Activated B cell treated with CpG ODN at 0.5 μM for 24 hours (primary cell): ENCODE measurements at regions of chr11 and their contacts with region 1.

Region 1: DNA sequence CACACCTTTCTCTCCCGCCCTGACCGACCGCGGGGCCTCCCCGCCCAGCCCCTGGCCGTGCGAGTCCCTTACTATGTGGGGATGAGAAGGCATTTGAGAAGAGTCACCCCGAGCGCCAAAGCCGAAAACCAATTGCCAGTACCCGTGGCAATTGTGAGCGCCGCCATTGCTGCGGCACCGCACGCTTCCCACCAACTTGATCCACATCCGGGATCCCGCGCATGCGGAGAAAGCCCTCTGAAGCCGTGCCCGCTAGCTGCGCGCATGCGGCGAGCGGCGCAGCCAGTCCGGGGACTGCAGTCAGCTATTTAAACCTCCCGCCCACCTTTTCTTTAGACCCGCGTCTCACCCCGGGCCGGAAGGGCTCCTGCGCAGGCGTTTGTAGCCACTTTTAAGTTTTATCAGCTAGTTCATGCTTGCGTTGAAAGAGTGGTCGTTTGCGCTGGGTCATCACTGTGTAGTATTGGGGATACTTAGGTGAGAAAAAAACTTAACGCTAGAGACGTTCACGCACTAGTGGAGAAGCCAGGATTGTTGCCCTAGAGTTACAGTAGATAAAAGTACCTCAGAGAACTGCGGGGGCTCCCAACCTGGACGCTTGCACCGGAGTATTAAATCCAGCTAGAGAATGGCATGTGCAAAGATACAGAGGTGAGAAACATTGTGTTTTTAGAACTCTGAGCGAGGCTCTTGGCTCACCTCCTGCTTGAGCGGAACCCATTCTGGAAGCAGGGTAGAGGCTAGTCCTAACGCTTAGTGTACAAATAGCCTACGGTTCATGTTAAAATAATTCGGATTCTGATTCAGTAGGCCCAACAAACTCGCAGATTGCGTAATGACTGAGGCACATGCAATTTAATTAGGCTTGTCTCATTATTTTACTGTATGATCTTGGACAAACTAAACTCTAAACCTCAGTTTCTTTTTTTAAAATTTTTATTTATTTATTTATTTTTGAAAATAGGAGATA is at the start of gene ALG8:
- DNase-seq: peak; percentile 94
- ATAC-seq: peak; percentile 94
- H3K4me3 Mint-ChIP-seq: peak within 1 kb of the TSS; percentile 95
- H3K27ac Mint-ChIP-seq: peak within 1 kb of the TSS; percentile 92
- H3K4me1 Mint-ChIP-seq: peaks cover 49% of the 10 kb centered on the region
- H3K27me3 Mint-ChIP-seq: no peaks in the 10 kb centered on the region
- CTCF ChIP-seq: no peak
- total RNA-seq, gene ALG8: 42.8 and 46.0 TPM in 2 replicates

Region 2: DNA sequence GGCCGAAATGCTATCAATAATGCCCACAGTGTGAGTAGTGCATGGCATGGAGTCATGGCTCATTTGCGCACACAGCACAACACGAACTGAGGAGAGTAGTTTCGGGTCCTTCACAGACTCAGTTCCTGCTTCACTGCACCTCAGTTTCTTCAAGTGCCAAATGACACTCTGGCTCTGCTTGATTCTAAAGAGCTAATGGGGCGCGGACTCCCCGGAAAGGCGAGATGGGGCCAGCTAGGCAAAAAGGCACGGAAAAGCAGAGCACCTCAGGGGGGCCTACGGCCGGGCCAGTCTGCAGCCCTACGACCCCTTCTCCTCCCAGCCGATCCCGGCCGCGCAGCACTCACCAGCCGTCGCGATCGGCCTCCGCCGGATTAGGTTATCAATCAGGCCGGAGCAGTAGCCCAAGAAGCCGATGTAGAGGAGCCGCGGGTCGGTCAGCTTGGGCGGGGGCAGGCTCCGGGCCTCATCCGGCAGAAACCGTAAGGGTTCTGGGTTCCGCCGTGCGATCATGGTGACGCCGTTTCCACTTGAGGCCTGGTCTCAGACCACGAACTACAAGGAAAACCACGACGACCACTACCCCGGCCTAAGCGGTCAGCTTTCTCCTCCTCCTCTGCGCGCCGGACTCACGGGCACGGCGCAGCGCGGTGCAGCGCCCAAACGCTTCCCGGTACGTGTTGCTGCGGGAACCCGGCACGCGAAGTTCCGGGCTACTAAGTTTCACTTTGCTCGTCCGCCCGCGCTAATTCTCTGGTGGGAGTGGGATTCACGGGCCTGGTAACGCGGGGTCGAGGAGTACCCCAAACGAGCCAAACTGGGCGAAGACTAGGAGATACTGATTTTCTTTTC is 60.2 kb before region 1 on chr11 and contains the start of gene NDUFC2:
- CTCF ChIA-PET with region 1: no interaction called
- POLR2A ChIA-PET with region 1: interaction called, 16 read pairs
- intact Hi-C with region 1: loop called (anchors 2 kb)
- DNase-seq: peak; percentile 60
- ATAC-seq: peak; percentile 79
- H3K4me3 Mint-ChIP-seq: peak within 1 kb of the TSS; percentile 93
- H3K27ac Mint-ChIP-seq: peak within 1 kb of the TSS; percentile 86
- H3K4me1 Mint-ChIP-seq: peaks cover 51% of the 10 kb centered on the region
- H3K27me3 Mint-ChIP-seq: no peaks in the 10 kb centered on the region
- CTCF ChIP-seq: no peak
- total RNA-seq, gene NDUFC2: 83.5 and 88.4 TPM in 2 replicates

Region 3: DNA sequence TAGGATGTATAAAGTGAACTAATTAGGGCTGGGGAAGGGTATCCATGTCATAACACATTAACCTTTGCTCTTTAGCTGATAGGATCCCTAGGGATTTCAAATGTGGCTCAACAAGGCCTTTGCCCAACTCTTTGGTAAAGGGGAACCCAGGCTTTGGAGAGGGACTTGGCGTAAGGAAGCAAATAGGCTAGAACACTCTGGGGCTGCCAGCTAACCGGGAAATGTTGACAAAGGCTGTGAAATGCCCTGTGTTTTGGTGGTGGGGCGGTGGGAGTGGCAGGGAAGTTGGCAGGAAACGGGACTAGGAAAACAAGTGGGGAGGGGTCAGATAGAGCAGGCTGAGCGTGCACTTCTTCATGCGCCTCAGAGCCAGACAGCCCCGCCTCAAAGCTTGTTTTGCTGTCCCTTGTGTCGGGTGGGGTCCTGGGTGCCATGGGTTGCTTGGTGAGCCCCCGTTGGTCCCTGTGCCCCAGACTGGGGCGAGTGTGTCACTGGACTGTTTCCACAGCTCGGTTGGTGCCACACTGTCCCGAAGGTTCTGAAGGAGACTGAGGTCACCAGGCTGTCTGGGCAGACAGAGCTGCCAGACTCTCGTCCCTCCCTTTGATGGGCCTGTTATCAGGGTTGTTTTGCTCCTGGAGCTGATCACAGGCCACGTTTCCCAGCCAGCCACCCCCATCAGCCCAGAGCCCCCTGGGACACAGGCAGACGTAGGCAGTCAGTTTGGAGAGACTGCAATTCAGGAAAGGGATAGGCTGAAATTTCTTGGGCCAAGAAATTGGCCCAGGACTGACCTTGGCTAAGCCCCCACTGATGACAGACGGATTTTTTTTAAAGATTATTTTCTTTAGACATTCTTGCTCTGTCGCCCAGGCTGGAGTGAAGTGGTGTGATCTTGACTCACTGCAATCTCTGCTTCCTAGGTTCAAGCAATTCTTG is 29.1 kb after region 1 on chr11:
- CTCF ChIA-PET with region 1: no interaction called
- POLR2A ChIA-PET with region 1: no interaction called
- intact Hi-C with region 1: no loop called
- DNase-seq: no peak
- ATAC-seq: no peak
- H3K4me3 Mint-ChIP-seq: no peak overlapping the region
- H3K27ac Mint-ChIP-seq: no peak overlapping the region
- H3K4me1 Mint-ChIP-seq: no peaks in the 10 kb centered on the region
- H3K27me3 Mint-ChIP-seq: no peaks in the 10 kb centered on the region
- CTCF ChIP-seq: no peak

Region 4: GRCh38 chr11:78325274-78325781 is 185.6 kb after region 1 on chr11:
- CTCF ChIA-PET with region 1: no interaction called
- POLR2A ChIA-PET with region 1: interaction called, 11 read pairs
- intact Hi-C with region 1: no loop called
- DNase-seq: no peak
- ATAC-seq: peak; percentile 62
- H3K4me3 Mint-ChIP-seq: no peak overlapping the region
- H3K27ac Mint-ChIP-seq: peak overlapping the region; percentile 8
- H3K4me1 Mint-ChIP-seq: peaks cover 61% of the 10 kb centered on the region
- H3K27me3 Mint-ChIP-seq: no peaks in the 10 kb centered on the region
- CTCF ChIP-seq: no peak

Region 5: DNA sequence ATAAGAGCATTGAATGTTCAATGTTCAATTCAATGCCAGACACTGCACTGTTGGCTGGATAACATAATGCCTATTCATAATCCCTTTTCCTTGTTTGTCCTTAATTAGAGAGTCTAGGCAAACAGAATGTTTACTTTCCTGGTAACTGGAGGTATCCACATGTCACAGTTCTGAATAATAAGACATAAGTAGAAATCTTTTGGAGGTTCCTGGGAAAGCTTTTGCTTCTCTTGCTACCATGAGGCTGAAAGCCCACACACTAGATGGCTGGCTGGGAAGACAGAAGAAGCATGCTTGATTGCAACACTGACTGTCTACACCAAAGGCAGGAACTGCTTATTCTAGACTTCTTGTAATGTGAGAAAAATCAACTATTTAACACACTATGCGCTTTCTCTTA is 198.4 kb after region 1 on chr11:
- CTCF ChIA-PET with region 1: no interaction called
- POLR2A ChIA-PET with region 1: no interaction called
- intact Hi-C with region 1: no loop called
- DNase-seq: no peak
- ATAC-seq: no peak
- H3K4me3 Mint-ChIP-seq: no peak overlapping the region
- H3K27ac Mint-ChIP-seq: no peak overlapping the region
- H3K4me1 Mint-ChIP-seq: peaks cover 37% of the 10 kb centered on the region
- H3K27me3 Mint-ChIP-seq: no peaks in the 10 kb centered on the region
- CTCF ChIP-seq: no peak

Region 6: DNA sequence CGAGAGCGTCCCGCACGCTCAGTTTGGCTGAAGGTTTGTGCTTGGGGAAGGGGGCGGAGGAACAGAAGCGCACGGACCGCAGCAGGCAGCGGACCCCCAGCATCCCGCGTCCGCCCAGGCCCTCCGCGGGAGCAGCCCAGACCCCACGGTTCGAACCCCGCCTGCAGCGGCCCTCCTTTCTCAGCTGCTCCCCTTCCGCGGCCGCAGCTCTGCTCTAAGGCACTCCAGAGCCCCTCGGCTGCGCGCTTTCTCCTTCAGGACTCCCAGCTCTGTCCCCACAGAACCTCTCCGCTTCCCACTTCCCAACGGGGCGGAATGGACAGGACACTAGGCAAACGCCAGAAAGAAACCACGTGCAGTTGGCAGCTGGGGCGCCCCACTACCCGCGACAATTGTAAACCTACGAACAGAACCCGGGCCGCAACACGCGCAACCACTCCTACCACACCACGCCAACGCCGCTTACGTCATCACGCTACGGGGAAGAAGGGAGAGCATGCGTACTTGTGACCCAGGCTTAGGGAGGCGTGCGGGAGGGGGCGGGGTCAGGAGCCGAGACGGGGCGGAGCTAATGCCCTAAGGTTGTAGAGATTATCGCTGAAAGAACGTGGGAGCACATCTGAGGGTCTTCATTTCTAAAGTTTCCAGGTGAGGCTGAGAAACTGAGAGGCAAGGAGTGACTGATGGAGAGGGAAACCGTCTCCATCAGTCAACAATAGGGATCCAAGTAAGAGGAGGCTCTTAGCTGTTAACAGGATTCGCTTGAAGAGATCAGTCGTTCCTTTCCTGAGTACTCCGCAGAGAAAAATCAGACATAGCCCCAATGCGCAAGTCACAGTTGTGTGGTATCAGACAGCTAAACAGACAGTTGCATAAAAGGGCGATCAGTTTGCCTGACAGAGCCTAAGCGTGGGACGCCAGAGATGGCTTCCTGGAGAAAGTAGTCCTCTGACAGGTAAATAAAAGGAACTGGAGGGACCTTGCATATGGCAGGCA is 435.0 kb after region 1 on chr11 and contains the start of gene NARS2:
- CTCF ChIA-PET with region 1: no interaction called
- POLR2A ChIA-PET with region 1: interaction called, 11 read pairs
- intact Hi-C with region 1: loop called (anchors 1 kb)
- DNase-seq: peak; percentile 90
- ATAC-seq: peak; percentile 99
- H3K4me3 Mint-ChIP-seq: peak within 1 kb of the TSS; percentile 93
- H3K27ac Mint-ChIP-seq: peak within 1 kb of the TSS; percentile 94
- H3K4me1 Mint-ChIP-seq: peaks cover 32% of the 10 kb centered on the region
- H3K27me3 Mint-ChIP-seq: no peaks in the 10 kb centered on the region
- CTCF ChIP-seq: no peak
- total RNA-seq, gene NARS2: 16.5 and 18.9 TPM in 2 replicates